Breast epithelium (tissue), 4 donors: ENCODE measurements at regions of chr10 and their contacts with region 1.

Region 1: DNA sequence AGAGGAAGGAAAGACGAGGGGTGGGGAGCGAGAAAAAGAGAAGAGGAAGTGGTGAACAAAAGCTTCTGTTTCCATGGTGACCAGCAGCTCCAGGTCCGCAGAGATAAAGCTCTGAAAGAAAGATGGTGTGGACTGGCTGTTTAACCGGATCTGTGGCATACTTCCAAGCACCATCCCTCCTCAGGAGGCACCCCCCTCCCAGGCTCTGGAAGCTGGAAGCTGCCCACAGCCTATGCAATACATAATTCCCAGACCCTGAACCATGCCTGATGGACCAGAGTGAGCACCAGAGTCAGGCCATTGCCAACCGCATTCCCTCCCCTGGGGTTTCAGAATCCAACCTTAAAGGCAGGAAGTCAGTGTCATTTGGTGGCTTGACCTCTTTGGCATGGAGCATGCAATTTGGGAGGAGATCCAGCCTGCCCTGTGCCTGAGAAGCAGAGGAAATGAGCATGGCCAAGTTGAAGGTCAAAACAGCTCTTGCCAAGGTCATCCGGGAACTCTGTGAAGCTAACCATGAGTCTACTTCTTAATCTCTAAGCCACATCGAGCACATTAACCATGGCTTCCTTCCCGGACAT is 22.2 kb upstream of the CPXM2 start:
- DNase-seq: no peak
- H3K4me3 ChIP-seq: no peak overlapping the region
- H3K27ac ChIP-seq: peak overlapping the region in 1 of 2 donors; percentile 19
- H3K4me1 ChIP-seq: no peaks in the 10 kb centered on the region
- H3K27me3 ChIP-seq: peaks cover 0 to 8% of the 10 kb centered on the region in 2 donors
- CTCF ChIP-seq: no peak
- POLR2A ChIP-seq: no peak

Region 2: GRCh38 chr10:123642293-123642692 is 271.5 kb before region 1 on chr10:
- intact Hi-C with region 1: no loop called
- DNase-seq: no peak
- H3K4me3 ChIP-seq: no peak overlapping the region
- H3K27ac ChIP-seq: no peak overlapping the region
- H3K4me1 ChIP-seq: no peaks in the 10 kb centered on the region
- H3K27me3 ChIP-seq: peaks cover 0 to 3% of the 10 kb centered on the region in 2 donors
- CTCF ChIP-seq: no peak
- POLR2A ChIP-seq: no peak

Region 3: GRCh38 chr10:123879606-123880257 is 34.0 kb before region 1 on chr10:
- intact Hi-C with region 1: no loop called
- DNase-seq: no peak
- H3K4me3 ChIP-seq: no peak overlapping the region
- H3K27ac ChIP-seq: no peak overlapping the region
- H3K4me1 ChIP-seq: no peaks in the 10 kb centered on the region
- H3K27me3 ChIP-seq: no peaks in the 10 kb centered on the region
- CTCF ChIP-seq: no peak
- POLR2A ChIP-seq: no peak

Region 4: GRCh38 chr10:123893651-123894050 is 20.1 kb before region 1 on chr10:
- intact Hi-C with region 1: loop called (anchors 2 kb)
- DNase-seq: no peak
- H3K4me3 ChIP-seq: no peak overlapping the region
- H3K27ac ChIP-seq: no peak overlapping the region
- H3K4me1 ChIP-seq: no peaks in the 10 kb centered on the region
- H3K27me3 ChIP-seq: peaks cover 0 to 10% of the 10 kb centered on the region in 2 donors
- CTCF ChIP-seq: no peak
- POLR2A ChIP-seq: no peak